Activated B cell treated with CpG ODN at 0.5 μM for 24 hours (primary cell): ENCODE measurements at regions of chr16 and their contacts with region 1.

Region 1: GRCh38 chr16:636206-637080 is at the start of gene METTL26:
- DNase-seq: peak; percentile 91
- ATAC-seq: peak; percentile 82
- H3K4me3 Mint-ChIP-seq: peak within 1 kb of the TSS; percentile 95
- H3K27ac Mint-ChIP-seq: peak within 1 kb of the TSS; percentile 97
- H3K4me1 Mint-ChIP-seq: peaks cover 30% of the 10 kb centered on the region
- H3K27me3 Mint-ChIP-seq: no peaks in the 10 kb centered on the region
- CTCF ChIP-seq: no peak
- total RNA-seq, gene METTL26: 48.7 and 49.9 TPM in 2 replicates

Region 2: GRCh38 chr16:401468-402348 is 234.7 kb before region 1 on chr16 and contains the start of gene DECR2:
- CTCF ChIA-PET with region 1: no interaction called
- POLR2A ChIA-PET with region 1: interaction called, 5 read pairs
- intact Hi-C with region 1: loop called (anchors 1 kb)
- DNase-seq: peak; percentile 95
- ATAC-seq: peak; percentile 86
- H3K4me3 Mint-ChIP-seq: peak within 1 kb of the TSS; percentile 93
- H3K27ac Mint-ChIP-seq: peak within 1 kb of the TSS; percentile 98
- H3K4me1 Mint-ChIP-seq: peaks cover 24% of the 10 kb centered on the region
- H3K27me3 Mint-ChIP-seq: no peaks in the 10 kb centered on the region
- CTCF ChIP-seq: no peak
- total RNA-seq, gene DECR2: 4.4 and 6.7 TPM in 2 replicates

Region 3: DNA sequence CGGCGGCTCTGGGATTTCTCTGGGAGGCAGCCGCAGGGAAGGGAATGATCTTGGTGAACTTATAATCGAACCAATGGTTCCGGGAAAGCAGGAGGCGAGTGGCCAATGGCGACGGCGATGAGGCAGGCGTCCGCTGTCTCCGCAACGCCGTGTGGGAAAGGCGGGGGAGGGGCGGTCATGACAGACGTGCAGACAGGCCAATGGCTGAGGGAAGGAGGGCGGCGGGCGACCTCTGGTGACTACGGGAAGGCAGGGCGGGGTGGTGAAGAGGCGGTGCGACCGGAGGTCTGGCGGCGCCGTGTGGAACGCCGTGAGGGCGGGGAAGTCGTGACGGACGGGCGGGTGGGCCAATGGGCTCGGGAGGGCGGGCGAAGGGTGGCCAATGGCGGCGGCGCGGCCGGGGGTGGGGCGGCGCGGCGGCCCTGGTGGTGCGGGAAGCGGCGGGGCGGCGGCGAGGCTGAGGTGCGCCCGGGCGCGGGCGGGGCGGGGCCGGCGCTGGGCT is 46.7 kb before region 1 on chr16 and contains the start of gene RAB40C:
- CTCF ChIA-PET with region 1: no interaction called
- POLR2A ChIA-PET with region 1: interaction called, 14 read pairs
- intact Hi-C with region 1: loop called (anchors 1 kb)
- DNase-seq: peak; percentile 96
- ATAC-seq: peak; percentile 86
- H3K4me3 Mint-ChIP-seq: peak within 1 kb of the TSS; percentile 99
- H3K27ac Mint-ChIP-seq: peak within 1 kb of the TSS; percentile 100
- H3K4me1 Mint-ChIP-seq: peaks cover 42% of the 10 kb centered on the region
- H3K27me3 Mint-ChIP-seq: no peaks in the 10 kb centered on the region
- CTCF ChIP-seq: no peak
- total RNA-seq, gene RAB40C: 10.5 and 13.1 TPM in 2 replicates

Region 4: GRCh38 chr16:660459-661183 is 24.2 kb after region 1 on chr16:
- CTCF ChIA-PET with region 1: no interaction called
- POLR2A ChIA-PET with region 1: interaction called, 11 read pairs
- intact Hi-C with region 1: loop called (anchors 2 kb)
- DNase-seq: peak; percentile 61
- ATAC-seq: peak; percentile 91
- H3K4me3 Mint-ChIP-seq: peak overlapping the region; percentile 55
- H3K27ac Mint-ChIP-seq: no peak overlapping the region
- H3K4me1 Mint-ChIP-seq: peaks cover 7% of the 10 kb centered on the region
- H3K27me3 Mint-ChIP-seq: no peaks in the 10 kb centered on the region
- CTCF ChIP-seq: no peak

Region 5: DNA sequence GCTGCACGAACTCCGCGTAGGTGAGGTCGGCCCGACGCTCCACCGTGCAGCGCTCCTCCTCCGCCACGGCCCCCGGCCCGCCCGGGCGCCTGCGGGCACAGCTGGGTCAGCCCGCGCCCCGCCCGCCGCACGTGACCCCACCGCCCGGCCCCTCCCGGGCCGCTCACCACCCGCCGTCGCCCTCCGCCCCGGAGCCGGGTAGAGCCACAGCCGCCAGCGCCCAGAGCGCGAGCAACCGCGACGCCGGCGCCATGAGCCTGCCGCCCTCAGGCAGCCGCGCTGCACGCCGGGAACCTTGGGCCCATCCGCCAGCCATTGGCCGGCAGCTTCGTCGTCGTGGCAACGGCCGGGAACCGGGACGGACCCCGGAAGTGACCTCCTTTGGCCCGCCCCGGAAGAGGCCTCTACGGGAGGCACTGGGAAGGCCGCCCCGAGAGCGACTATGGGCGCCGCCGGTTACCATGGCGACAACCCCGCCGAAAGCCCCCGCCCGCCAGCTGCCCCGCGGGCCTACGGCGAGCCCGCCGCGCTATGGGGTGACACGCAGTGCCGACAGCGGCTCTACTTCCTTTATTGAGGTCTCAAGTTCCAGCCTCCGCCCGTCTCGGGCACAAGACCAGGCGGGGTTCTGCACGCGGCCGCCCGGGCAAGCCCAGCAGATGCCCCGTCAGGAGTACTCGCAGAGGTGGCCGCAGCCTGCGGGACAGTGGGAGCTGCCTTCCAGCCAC is 47.8 kb after region 1 on chr16 and contains the start of gene JMJD8:
- CTCF ChIA-PET with region 1: no interaction called
- POLR2A ChIA-PET with region 1: interaction called, 10 read pairs
- intact Hi-C with region 1: loop called (anchors 1 kb)
- DNase-seq: peak; percentile 98
- ATAC-seq: peak; percentile 49
- H3K4me3 Mint-ChIP-seq: peak within 1 kb of the TSS; percentile 87
- H3K27ac Mint-ChIP-seq: peak within 1 kb of the TSS; percentile 70
- H3K4me1 Mint-ChIP-seq: peaks cover 38% of the 10 kb centered on the region
- H3K27me3 Mint-ChIP-seq: no peaks in the 10 kb centered on the region
- CTCF ChIP-seq: no peak
- total RNA-seq, gene JMJD8: 41.4 and 47.0 TPM in 2 replicates